Mammary epithelial cell (primary cell): ENCODE measurements at regions of chr22 and their contacts with region 1.

Region 1: DNA sequence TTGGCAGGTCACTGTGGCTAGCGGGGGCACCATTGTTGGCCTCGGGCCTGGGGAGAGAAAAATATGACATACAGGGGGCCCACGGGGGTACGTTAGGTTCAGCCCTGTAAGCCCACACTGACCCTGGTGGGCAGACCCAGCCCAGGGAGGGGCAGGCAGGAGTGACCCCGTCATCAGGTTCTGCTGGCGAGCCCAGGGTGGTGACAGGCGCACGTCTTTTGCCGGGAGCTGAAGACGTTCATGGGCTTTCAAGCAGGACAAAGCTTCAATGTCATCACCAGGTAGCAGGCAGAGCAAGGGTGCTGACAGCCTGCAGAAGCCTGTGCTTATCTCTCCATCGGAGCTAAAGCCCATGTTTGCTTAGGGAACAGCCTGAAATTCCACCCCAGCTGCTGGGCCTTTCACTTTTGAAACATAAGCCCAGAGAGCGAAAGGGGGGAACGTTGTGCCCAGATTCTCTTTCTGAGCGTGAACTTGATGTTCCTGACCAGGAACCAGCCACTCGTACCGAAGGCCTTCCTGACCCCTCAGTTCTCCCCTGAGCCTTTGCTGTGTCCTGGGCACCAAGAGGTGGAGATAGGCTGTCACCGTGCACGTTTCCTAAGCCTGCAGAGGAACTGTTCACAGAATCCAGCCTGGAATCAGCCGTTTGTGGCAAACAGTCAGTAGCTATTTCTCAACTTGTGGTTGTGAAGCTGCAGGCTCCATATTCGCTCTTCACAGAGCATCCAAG is 74.0 kb upstream of the ATXN10 start:
- DNase-seq: no peak
- H3K4me3 ChIP-seq: no peak overlapping the region
- H3K27ac ChIP-seq: no peak overlapping the region
- H3K4me1 ChIP-seq: peaks cover 7% of the 10 kb centered on the region
- H3K27me3 ChIP-seq: no peaks in the 10 kb centered on the region
- CTCF ChIP-seq: no peak

Region 2: DNA sequence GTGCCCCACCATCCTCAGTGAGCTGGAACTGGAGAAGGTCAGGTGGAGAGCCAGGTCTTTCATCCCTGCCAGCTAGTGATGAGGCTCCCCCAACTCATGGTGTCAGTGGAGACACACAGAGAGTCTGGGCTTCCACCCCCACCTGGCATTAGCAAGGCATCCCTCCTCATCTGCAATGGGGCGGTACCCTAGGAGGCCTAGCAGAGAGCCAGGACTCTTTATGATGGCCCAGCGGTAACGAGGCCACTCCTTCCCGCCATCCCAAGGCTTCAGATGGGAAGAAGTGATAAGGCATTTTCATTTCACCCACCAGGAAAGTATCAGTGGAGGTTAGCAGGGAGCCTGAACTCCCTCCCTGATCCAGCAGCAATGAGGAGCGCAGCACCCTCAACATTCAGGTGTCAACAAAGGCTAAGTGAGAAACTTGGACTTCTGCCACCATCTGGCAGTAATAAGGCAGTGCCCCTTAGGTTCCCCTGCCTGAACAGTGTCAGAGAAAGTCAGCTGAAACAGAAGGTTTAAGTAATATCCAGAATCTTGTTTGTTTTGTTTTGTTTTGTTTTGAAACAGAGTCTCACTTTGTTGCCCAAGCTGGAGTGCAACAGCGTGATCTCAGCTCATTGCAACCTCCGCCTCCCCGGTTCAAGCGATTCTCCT is 135.5 kb before region 1 on chr22:
- CTCF ChIA-PET with region 1: no interaction called
- dilution Hi-C with region 1: no loop called
- in situ Hi-C with region 1: no loop called
- intact Hi-C with region 1: no loop called
- DNase-seq: no peak
- H3K4me3 ChIP-seq: no peak overlapping the region
- H3K27ac ChIP-seq: no peak overlapping the region
- H3K4me1 ChIP-seq: no peaks in the 10 kb centered on the region
- H3K27me3 ChIP-seq: no peaks in the 10 kb centered on the region
- CTCF ChIP-seq: no peak

Region 3: DNA sequence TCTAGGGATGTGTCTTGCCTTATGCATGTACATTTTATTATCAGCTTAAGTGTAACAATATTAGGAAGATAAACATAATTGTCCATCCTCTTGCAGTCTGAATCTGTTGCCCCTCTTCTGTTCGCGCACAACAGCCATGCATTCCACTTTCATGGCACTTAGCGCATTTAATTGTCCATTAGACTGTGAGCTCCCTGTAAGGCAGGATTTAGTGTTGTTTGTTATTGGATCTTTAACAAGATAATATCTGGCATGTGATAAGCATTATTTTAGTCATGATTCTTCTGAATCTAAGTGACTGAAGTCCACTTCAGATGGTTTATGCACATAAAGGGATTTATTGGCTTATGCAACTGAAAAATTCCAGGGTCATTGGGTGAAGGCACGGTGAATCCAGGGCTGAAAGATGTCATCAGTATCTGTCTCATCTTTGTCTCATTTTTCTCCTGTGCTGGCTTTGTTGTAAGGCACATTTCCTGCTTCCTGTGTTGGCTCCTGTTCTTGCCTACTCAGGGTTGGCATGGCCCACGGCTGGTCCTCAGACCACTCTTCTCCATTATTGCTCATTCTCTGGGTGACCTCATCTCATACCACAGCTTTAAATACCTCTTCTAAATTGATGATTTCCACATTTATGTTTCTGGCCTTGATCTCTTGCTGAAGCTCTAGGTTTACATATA is 111.6 kb after region 1 on chr22:
- CTCF ChIA-PET with region 1: no interaction called
- dilution Hi-C with region 1: no loop called
- in situ Hi-C with region 1: no loop called
- intact Hi-C with region 1: no loop called
- DNase-seq: peak; percentile 74
- H3K4me3 ChIP-seq: no peak overlapping the region
- H3K27ac ChIP-seq: peak overlapping the region; percentile 16
- H3K4me1 ChIP-seq: peaks cover 20% of the 10 kb centered on the region
- H3K27me3 ChIP-seq: no peaks in the 10 kb centered on the region
- CTCF ChIP-seq: no peak

Region 4: GRCh38 chr22:45889305-45890093 is 291.9 kb after region 1 on chr22:
- CTCF ChIA-PET with region 1: no interaction called
- dilution Hi-C with region 1: loop called (anchors 10 kb)
- in situ Hi-C with region 1: no loop called
- intact Hi-C with region 1: no loop called
- DNase-seq: no peak
- H3K4me3 ChIP-seq: no peak overlapping the region
- H3K27ac ChIP-seq: no peak overlapping the region
- H3K4me1 ChIP-seq: peaks cover 6% of the 10 kb centered on the region
- H3K27me3 ChIP-seq: no peaks in the 10 kb centered on the region
- CTCF ChIP-seq: no peak